ENCODE measurements at regions of chr11 and their contacts with region 1.

Region 1: DNA sequence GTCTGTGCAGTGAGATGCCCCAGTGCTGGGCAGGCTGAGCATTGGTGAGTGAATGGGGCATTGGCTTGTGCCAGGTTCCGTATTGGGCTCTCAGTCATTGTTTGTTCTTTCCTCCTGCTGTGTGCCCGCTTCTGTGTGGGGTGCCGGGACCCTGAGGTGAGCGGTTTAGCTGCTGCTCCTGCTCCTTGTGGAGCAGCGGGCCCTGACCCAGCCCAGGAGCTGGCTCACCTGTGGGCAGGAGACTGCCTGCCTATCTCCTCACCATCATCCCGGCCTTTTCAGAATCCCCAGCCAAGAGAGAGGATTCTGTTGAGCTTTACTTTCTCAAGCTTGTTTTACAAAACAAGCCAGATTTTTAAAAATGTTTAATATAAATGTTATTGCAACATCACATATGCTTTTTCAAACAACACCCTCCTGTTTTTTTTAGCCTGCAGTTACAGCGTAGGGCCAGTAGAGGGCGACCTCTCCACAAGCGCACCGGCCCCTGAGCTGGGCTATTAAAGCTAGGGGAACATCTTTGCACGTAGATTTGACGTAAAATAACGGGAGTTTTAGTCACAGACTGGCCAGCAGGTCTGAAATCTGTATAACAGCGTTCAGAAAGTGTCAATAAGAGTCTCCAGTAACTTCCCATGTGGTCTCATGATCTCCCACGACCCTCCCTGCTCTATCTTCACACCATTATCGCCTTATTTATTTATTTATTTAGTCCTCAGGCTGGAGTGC is 25.1 kb upstream of the RELT start:
- DNase-seq: peak; percentile 73
- H3K4me3 ChIP-seq: no peak overlapping the region
- H3K27ac ChIP-seq: no peak overlapping the region
- H3K4me1 ChIP-seq: no peaks in the 10 kb centered on the region
- H3K27me3 ChIP-seq: no peaks in the 10 kb centered on the region
- CTCF ChIP-seq: peak; percentile 91 to 97
- POLR2A ChIP-seq: no peak

Region 2: GRCh38 chr11:73335204-73335923 is 15.7 kb before region 1 on chr11:
- CTCF ChIA-PET with region 1: interaction called, 73 read pairs
- POLR2A ChIA-PET with region 1: no interaction called
- dilution Hi-C with region 1: no loop called
- intact Hi-C with region 1: no loop called
- DNase-seq: peak; percentile 88
- H3K4me3 ChIP-seq: no peak overlapping the region
- H3K27ac ChIP-seq: peak overlapping the region; percentile 70
- H3K4me1 ChIP-seq: peaks cover 33% of the 10 kb centered on the region
- H3K27me3 ChIP-seq: no peaks in the 10 kb centered on the region
- CTCF ChIP-seq: peak; percentile 95 to 96
- POLR2A ChIP-seq: no peak

Region 3: DNA sequence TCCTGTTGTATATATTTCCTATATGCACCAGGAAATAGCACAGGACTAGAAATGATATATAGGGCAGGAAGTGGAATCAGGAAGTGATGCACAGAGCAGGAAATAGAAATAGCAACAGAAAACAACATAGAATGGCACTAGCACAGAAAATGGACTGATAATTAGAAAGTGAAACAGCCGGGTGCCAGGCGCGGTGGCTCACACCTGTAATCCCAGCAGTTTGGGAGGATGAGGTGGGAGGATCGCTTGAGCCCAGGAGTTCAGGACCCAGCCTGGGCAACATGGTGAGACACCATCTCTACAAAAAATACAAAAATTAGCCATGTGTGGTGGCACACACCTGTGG is 15.2 kb after region 1 on chr11:
- CTCF ChIA-PET with region 1: interaction called, 54 read pairs
- POLR2A ChIA-PET with region 1: no interaction called
- dilution Hi-C with region 1: no loop called
- intact Hi-C with region 1: no loop called
- DNase-seq: no peak
- H3K4me3 ChIP-seq: no peak overlapping the region
- H3K27ac ChIP-seq: no peak overlapping the region
- H3K4me1 ChIP-seq: peaks cover 15% of the 10 kb centered on the region
- H3K27me3 ChIP-seq: no peaks in the 10 kb centered on the region
- CTCF ChIP-seq: no peak
- POLR2A ChIP-seq: no peak

Region 4: GRCh38 chr11:73376160-73376802 is 25.2 kb after region 1 on chr11 and contains the start of gene RELT:
- CTCF ChIA-PET with region 1: interaction called, 26 read pairs
- POLR2A ChIA-PET with region 1: interaction called, 3 read pairs
- dilution Hi-C with region 1: no loop called
- intact Hi-C with region 1: no loop called
- DNase-seq: peak; percentile 93
- H3K4me3 ChIP-seq: peak within 1 kb of the TSS; percentile 47 to 80 (median 49)
- H3K27ac ChIP-seq: peak within 1 kb of the TSS; percentile 75
- H3K4me1 ChIP-seq: peaks cover 2% of the 10 kb centered on the region
- H3K27me3 ChIP-seq: no peaks in the 10 kb centered on the region
- CTCF ChIP-seq: peak; percentile 87 to 95
- POLR2A ChIP-seq: peak; percentile 99
- total RNA-seq, gene RELT: 12.6 and 13.1 TPM in 2 replicates

Region 5: DNA sequence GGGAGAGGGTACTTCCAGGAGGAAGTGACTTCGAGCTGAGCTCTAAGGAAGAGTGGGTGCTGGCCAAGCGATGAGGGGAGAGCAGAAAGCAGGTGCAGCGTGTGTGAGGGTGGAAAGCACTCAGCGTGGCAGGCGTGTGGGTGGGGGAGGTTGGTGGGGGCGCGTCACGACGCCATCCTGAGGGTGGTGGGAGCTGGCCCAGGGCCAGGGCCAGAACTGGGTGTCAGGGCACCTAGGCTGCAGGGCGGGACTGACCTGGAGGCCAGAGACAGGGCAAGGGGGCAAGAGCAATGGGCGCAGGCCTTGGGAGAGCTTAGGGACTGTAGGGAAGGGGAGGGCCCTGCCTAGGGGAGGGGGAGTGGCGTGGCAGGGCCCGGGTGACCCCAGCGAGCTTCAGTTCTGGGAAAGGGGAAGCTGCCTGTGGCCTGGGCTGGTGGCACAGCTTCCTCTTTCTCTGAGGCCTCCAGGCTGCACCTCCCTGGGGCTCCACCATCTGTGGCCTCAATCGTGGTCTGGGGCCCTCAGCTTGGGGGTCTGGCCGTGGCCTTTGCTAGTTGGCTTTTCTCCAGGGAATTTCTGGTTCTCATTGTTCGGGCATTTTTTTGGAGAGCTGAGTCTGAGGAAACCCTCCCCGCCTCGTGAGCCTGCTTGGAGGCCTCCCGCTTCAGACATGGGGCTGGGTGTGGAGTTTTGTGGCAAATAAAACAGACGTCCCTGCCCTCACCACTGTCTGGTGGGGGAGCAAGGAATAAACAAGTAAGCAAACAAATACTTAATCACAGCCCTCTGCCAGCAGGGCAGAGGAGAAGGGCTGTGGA is 34.0 kb after region 1 on chr11:
- CTCF ChIA-PET with region 1: interaction called, 17 read pairs
- POLR2A ChIA-PET with region 1: no interaction called
- dilution Hi-C with region 1: no loop called
- intact Hi-C with region 1: no loop called
- DNase-seq: peak; percentile 53
- H3K4me3 ChIP-seq: no peak overlapping the region
- H3K27ac ChIP-seq: peak overlapping the region; percentile 43
- H3K4me1 ChIP-seq: peaks cover 25% of the 10 kb centered on the region
- H3K27me3 ChIP-seq: no peaks in the 10 kb centered on the region
- CTCF ChIP-seq: no peak
- POLR2A ChIP-seq: no peak

Region 6: DNA sequence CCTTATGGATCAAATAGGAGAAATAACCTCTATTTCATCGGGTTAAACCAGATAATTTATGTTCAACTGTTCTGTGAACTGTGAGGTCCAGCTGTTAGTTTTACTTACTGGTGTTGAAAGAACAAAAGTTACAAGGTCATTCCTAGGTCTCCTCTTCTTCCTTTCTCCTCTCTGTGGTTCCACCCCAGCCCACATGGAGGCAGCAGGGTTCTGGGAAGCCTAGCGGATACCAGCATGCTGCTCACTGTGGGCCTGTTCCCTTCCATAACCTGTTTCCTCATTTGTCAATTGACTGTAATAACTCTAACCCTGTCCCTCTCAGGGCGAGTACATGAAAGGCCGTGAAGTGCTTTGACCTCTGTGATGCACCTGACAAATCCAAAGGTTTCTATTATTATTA is 53.0 kb after region 1 on chr11:
- CTCF ChIA-PET with region 1: interaction called, 27 read pairs
- POLR2A ChIA-PET with region 1: no interaction called
- dilution Hi-C with region 1: no loop called
- intact Hi-C with region 1: no loop called
- DNase-seq: peak; percentile 53
- H3K4me3 ChIP-seq: no peak overlapping the region
- H3K27ac ChIP-seq: no peak overlapping the region
- H3K4me1 ChIP-seq: peaks cover 4% of the 10 kb centered on the region
- H3K27me3 ChIP-seq: no peaks in the 10 kb centered on the region
- CTCF ChIP-seq: peak; percentile 44 to 68
- POLR2A ChIP-seq: no peak

Region 7: DNA sequence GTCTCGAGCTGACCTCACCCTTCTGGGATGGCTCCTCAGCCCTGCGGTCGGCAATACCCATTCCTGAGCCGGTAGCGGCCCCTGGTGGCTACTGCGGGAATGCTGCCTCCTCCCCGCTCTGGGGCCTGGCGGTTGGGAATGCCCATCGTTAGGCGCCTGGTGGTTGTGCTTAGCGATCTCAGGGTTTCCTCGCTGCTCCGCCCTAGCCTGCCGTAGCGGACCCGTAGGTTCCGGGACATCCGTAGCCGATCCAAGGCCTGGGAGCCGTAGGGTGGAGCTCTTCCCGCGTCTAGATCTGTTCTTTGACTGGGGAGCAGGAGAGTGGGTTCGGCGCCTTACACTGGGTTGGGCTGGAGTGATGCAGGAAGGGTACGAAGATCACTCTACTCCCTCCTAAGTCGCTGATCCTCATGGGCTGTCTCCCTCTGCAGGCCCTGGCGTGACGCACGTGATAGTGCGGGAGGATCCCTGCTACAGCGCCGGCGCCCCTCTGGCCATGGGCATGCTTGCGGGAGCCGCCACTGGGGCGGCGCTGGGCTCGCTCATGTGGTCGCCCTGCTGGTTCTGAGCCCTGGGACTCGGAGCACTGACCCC is 310.1 kb after region 1 on chr11:
- CTCF ChIA-PET with region 1: interaction called, 86 read pairs
- POLR2A ChIA-PET with region 1: no interaction called
- dilution Hi-C with region 1: no loop called
- intact Hi-C with region 1: loop called (anchors 1 kb)
- DNase-seq: peak; percentile 84
- H3K4me3 ChIP-seq: peak overlapping the region in 2 of 3 experiments; percentile 26 to 32
- H3K27ac ChIP-seq: no peak overlapping the region
- H3K4me1 ChIP-seq: peaks cover 6% of the 10 kb centered on the region
- H3K27me3 ChIP-seq: no peaks in the 10 kb centered on the region
- CTCF ChIP-seq: peak; percentile 96 to 98
- POLR2A ChIP-seq: no peak